Activated T-helper 1 cell treated with anti-CD3 and anti-CD28 coated beads, Interleukin-12 subunit alpha, Interleukin-12 subunit beta, Interleukin-2, Interleukin-4 antibody, amounts not matched to agents 30 ng/mL and 10 ng/mL and 1 ng/mL, durations not matched to agents 14 hours and 24 hours and 36 hours (primary cell): ENCODE measurements at regions of chr11 and their contacts with region 1.

Region 1: DNA sequence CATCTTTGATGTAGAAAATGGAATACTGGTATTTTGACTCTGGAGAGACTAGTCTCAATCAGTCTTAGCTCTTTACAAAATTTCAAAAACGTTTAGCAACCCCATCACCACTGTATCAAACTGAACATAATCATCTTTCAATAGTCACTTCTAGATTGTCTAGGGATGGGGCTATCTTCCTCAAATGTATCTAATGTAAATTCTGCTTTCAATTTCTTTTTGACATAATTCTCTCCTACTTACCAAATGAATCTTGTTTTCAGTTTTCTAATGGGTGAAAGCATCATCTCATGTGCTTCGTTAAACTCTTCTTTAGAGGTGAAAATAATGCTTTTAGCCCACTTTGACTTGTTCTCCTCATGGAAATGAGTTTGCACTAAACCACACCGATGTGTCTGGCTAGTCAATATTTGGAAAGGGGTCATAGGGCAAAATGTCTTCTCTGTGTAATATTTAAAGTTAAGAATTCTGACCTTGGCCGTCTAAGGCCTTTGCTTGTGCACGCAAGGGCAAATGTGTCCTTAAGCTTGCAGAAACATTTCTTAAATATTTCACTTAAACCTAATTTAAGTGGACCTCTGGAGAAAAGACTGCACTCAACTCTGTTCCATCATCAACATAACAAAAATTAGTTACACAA is 5.2 kb downstream of the SIK3 start:
- DNase-seq: no peak
- H3K4me3 Mint-ChIP-seq: peak overlapping the region; percentile 53
- H3K27ac Mint-ChIP-seq: peak overlapping the region; percentile 81
- H3K4me1 Mint-ChIP-seq: peaks cover 77% of the 10 kb centered on the region
- H3K27me3 Mint-ChIP-seq: no peaks in the 10 kb centered on the region

Region 2: GRCh38 chr11:116986521-116987105 is 106.5 kb before region 1 on chr11:
- intact Hi-C with region 1: loop called (anchors 1 kb)
- DNase-seq: no peak
- H3K4me3 Mint-ChIP-seq: peak overlapping the region; percentile 65
- H3K27ac Mint-ChIP-seq: peak overlapping the region; percentile 73
- H3K4me1 Mint-ChIP-seq: peaks cover 70% of the 10 kb centered on the region
- H3K27me3 Mint-ChIP-seq: no peaks in the 10 kb centered on the region

Region 3: GRCh38 chr11:117072517-117073461 is 20.3 kb before region 1 on chr11:
- intact Hi-C with region 1: loop called (anchors 1 kb)
- DNase-seq: no peak
- H3K4me3 Mint-ChIP-seq: peak overlapping the region; percentile 19
- H3K27ac Mint-ChIP-seq: peak overlapping the region; percentile 53
- H3K4me1 Mint-ChIP-seq: peaks cover 58% of the 10 kb centered on the region
- H3K27me3 Mint-ChIP-seq: no peaks in the 10 kb centered on the region

Region 4: DNA sequence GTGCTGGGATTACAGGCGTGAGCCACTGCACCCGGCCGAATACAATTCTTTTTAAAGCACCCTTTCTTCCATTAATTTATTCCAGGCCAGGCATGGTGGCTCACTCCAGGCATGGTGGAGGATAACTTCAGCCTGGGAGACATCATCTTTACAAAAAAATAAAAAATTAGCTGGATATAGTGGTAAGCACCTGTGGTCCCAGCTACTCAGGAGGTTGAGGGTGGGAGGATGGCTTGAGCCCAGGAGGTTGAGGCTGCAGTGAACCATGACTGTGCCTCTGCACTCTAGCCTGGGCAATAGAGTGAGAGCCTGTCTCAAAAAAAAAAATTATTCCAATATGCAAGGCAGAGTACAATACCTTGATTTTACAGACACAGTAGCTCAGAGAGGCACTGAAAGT is 117.5 kb after region 1 on chr11:
- intact Hi-C with region 1: no loop called
- DNase-seq: no peak
- H3K4me3 Mint-ChIP-seq: no peak overlapping the region
- H3K27ac Mint-ChIP-seq: no peak overlapping the region
- H3K4me1 Mint-ChIP-seq: no peaks in the 10 kb centered on the region
- H3K27me3 Mint-ChIP-seq: no peaks in the 10 kb centered on the region